ENCODE measurements at regions of chr11 and their contacts with region 1.

Region 1: DNA sequence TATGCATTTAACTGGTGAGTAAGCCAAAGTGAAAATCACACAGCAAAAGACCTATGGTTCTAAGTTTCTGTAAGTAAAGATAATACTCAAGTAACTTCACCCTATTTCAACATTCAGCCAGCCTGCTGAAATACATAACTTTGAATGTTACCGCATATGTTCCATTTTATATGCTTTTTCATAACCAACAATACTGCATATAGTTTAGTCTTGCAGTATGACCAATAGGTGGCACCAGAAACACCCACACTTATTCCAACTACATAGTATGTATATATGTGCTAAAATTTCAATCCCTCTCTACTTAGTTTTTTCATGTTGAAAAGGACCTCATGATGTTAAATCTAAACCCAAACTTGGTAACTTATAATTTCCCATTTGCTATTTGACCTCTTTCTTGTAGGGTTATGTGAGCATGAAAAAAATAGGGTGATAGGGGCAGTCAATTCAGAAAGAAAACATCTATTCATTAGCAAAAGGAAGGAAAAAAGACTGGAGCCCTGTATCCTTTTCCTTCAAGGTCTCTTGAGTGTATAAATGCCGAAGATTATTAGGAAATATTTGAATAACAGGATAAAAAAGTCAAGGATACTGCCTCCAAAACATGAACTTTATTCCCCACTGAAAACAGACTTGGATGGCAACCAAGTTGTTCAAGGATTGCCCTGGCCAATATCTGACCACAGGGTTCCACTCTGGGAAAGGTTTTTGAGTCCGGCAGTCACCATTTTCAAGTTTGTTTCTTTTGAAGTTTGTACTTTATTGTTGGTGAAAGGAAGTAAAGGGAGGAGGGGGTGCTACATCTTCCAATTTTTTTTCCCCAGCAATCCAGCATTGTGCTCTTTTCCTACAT is 23.8 kb upstream of the FZD4 start:
- DNase-seq: no peak
- ATAC-seq: peak; percentile 44

Region 2: GRCh38 chr11:86302100-86302793 is 676.7 kb before region 1 on chr11 and contains the start of gene HIKESHI:
- intact Hi-C with region 1: no loop called
- DNase-seq: peak; percentile 100
- ATAC-seq: peak; percentile 100
- total RNA-seq, gene HIKESHI: 51.5 TPM

Region 3: DNA sequence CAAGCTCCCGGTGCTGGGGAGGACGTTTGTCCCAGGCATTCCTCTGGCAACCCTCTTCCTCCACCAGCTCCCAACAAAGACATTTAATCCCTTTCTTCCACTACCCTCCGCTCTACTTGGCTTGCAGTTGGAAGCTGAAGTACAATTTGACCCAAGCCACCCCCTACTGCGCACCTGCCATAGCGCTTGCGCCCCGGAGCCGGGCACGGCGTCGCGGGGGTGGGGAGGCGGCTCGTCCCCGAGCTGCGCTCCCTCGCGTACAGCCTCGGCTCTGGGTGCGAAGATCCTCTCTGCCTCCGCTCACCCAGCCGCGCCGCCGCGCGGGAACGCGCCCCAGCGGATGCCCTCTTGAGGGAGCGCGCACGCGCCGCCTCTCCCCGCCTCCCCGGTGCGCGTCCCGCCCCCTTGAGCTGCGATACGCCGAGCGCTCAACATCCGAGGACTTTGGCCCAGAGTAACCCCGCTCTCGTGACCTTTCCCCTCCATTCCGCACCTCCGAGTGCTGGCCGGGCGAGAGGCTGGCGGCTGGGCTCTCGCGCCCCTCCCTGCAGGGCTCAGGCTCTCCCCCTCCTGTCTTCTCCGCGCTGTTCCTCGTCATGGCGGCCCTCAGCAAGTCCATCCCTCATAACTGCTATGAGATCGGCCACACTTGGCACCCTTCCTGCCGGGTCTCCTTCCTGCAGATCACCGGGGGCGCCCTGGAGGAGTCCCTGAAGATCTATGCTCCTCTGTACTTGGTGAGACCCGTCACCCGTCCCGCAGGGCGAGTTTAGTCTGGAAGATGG is 58.7 kb after region 1 on chr11 and contains the start of gene TMEM135:
- intact Hi-C with region 1: loop called (anchors 5 kb)
- DNase-seq: peak; percentile 96
- ATAC-seq: peak; percentile 99
- total RNA-seq, gene TMEM135: 18.1 TPM